ENCODE measurements at regions of chr7 and their contacts with region 1.

Region 1: DNA sequence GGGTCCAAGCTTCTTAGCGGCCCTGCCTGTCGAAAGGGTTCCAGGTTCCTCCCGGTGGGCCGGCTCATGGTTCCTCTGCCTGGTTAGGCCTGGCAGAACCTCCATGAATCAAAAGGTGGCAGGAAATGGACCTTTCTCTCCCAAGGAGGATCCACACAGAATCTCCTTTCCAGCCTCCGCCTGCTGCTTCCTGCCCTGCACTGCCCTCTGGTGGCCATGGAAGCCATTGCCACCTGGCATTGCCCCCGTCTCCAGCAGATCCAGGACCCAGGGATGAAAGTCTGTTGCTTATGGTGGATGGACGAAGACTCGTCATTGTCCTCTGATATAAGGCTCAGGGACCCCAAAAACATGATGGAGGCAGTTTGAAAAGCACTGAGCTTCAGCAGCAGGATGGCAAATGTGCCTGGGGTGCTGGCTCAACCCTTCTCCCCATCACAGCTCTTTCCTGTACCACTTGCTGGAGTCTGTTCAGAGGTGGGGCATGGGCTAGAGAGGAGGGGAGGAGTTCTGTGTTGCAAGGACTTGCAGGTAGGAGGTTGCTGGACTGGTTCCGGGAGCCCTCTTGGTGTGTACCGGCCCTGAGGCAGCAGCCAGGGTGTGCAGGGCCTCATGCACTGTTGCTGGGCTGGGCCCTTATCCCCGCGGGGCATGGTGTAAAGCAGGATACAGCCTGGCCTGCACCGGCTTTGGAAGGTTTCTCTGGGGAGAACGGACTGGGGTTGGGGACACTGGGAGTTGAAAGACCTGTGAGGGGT is 11.3 kb upstream of the INMT start:
- DNase-seq: peak; percentile 84
- H3K4me3 Mint-ChIP-seq: no peak overlapping the region
- H3K27ac Mint-ChIP-seq: no peak overlapping the region
- H3K4me1 Mint-ChIP-seq: peaks cover 39% of the 10 kb centered on the region
- H3K27me3 Mint-ChIP-seq: peaks cover 6% of the 10 kb centered on the region

Region 2: DNA sequence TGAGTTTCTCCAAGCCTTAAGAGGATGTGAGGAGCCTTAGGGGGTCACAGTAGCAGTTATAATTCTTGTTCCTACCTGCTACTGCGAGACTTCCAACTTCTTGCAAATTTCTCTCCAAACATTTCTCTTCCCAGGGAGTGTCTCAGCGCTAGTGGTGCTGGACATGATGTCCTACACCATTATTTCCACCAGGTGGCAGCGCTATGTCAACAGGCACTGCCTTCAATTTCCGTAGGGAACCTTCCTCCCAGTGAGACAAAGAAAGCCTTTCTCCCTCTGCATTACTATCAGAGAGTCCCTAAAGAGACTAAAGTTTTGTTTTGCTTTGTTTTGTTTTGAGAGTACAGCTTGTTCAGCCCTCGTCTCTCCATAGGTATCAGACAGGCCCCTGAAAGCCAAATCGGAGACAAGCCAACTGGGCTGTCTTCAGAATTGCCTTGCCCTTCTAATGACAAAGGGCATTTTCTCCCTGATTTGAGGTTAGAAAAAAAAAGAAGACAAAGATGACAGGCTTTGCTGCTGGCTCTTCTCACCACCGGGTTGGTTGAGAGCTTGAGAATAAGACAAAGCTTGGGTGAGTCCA is 191.8 kb before region 1 on chr7:
- CTCF ChIA-PET with region 1: interaction called, 25 read pairs
- DNase-seq: peak; percentile 45
- H3K4me3 Mint-ChIP-seq: no peak overlapping the region
- H3K27ac Mint-ChIP-seq: no peak overlapping the region
- H3K4me1 Mint-ChIP-seq: no peaks in the 10 kb centered on the region
- H3K27me3 Mint-ChIP-seq: no peaks in the 10 kb centered on the region

Region 3: GRCh38 chr7:30682212-30683083 is 58.2 kb before region 1 on chr7 and contains the start of gene CRHR2:
- CTCF ChIA-PET with region 1: interaction called, 11 read pairs
- DNase-seq: peak; percentile 46
- H3K4me3 Mint-ChIP-seq: peak within 1 kb of the TSS; percentile 48
- H3K27ac Mint-ChIP-seq: no peak within 1 kb of the TSS
- H3K4me1 Mint-ChIP-seq: peaks cover 12% of the 10 kb centered on the region
- H3K27me3 Mint-ChIP-seq: peaks cover 88% of the 10 kb centered on the region

Region 4: GRCh38 chr7:30702200-30702599 is 38.4 kb before region 1 on chr7:
- CTCF ChIA-PET with region 1: interaction called, 151 read pairs
- DNase-seq: peak; percentile 61
- H3K4me3 Mint-ChIP-seq: no peak overlapping the region
- H3K27ac Mint-ChIP-seq: no peak overlapping the region
- H3K4me1 Mint-ChIP-seq: peaks cover 19% of the 10 kb centered on the region
- H3K27me3 Mint-ChIP-seq: peaks cover 28% of the 10 kb centered on the region

Region 5: GRCh38 chr7:30708976-30709375 is 31.6 kb before region 1 on chr7:
- CTCF ChIA-PET with region 1: interaction called, 151 read pairs
- DNase-seq: no peak
- H3K4me3 Mint-ChIP-seq: no peak overlapping the region
- H3K27ac Mint-ChIP-seq: no peak overlapping the region
- H3K4me1 Mint-ChIP-seq: no peaks in the 10 kb centered on the region
- H3K27me3 Mint-ChIP-seq: peaks cover 15% of the 10 kb centered on the region

Region 6: GRCh38 chr7:30727061-30727945 is 13.3 kb before region 1 on chr7:
- CTCF ChIA-PET with region 1: interaction called, 41 read pairs
- DNase-seq: peak; percentile 80
- H3K4me3 Mint-ChIP-seq: peak overlapping the region; percentile 81
- H3K27ac Mint-ChIP-seq: peak overlapping the region; percentile 99
- H3K4me1 Mint-ChIP-seq: peaks cover 75% of the 10 kb centered on the region
- H3K27me3 Mint-ChIP-seq: peaks cover 12% of the 10 kb centered on the region

Region 7: DNA sequence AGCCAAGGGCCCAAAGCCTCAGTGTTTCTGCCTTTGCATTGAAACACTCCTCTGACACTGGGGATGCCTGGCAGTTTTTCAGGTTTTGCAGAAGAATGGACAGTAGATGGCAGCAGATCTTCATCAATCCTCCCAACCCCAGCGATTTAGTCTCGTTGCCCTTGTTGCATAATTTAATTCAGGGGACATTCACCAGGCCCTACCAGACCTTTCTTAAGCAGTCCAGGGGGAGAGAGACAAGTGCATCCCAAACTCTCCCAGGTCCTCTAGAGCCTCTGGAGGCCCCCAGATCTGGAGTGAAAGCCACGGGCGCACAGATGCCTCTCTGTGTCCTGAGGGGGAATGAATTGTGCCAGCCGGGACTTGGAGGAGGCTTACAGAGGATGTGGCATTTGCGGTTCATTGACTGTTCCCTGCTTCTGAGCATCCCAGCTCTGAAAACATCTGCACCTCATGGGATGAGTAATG is 60.2 kb after region 1 on chr7:
- CTCF ChIA-PET with region 1: no interaction called
- DNase-seq: peak; percentile 60
- H3K4me3 Mint-ChIP-seq: no peak overlapping the region
- H3K27ac Mint-ChIP-seq: no peak overlapping the region
- H3K4me1 Mint-ChIP-seq: peaks cover 24% of the 10 kb centered on the region
- H3K27me3 Mint-ChIP-seq: no peaks in the 10 kb centered on the region

Measured in activated naive CD4-positive, alpha-beta T cell treated with anti-CD3 and anti-CD28 coated beads, Interleukin-2, amount 10 ng/mL, durations not matched to agents 7 days and 5 days (primary cell).